ENCODE measurements at regions of chr7 and their contacts with region 1.

Region 1: DNA sequence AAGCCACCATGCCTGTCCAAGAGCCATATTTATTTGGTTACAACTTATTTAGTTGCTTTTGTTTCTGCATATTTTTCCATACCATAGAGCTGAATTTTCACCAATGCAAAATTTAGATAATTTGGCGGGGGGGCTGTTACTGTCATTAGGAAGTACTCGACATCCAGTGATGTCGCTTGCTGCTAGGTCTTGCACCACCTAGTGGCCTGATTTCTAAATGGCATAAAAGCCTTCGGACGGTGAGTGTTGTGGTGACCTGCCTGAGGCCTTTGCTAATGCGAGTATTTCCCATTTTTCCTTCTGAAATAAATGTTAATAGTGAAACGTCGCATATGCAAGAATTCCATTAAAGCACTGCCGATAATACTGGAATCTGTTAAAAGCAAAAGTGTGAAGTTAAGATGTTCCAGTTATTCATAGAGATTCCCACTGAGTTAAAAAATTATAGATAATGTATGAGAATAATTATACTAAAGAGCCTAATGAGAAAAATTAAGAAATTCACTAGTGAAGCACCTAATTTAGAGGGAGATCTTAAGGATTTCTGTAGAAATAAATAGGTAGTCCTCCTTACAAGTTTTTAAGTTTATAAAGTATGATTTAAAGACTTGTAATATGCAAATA is 86.1 kb upstream of the DNAJB6 start:
- DNase-seq: peak in 1 of 2 experiments; percentile 47
- H3K4me3 ChIP-seq: no peak overlapping the region
- H3K27ac ChIP-seq: no peak overlapping the region
- H3K4me1 ChIP-seq: no peaks in the 10 kb centered on the region
- H3K27me3 ChIP-seq: no peaks in the 10 kb centered on the region
- CTCF ChIP-seq: peak; percentile 93

Region 2: GRCh38 chr7:156903232-156903909 is 347.3 kb before region 1 on chr7:
- CTCF ChIA-PET with region 1: no interaction called
- POLR2A ChIA-PET with region 1: no interaction called
- intact Hi-C with region 1: loop called (anchors 5 kb)
- DNase-seq: peak; percentile 58 to 75
- H3K4me3 ChIP-seq: no peak overlapping the region
- H3K27ac ChIP-seq: no peak overlapping the region
- H3K4me1 ChIP-seq: peaks cover 13% of the 10 kb centered on the region
- H3K27me3 ChIP-seq: no peaks in the 10 kb centered on the region
- CTCF ChIP-seq: no peak

Region 3: DNA sequence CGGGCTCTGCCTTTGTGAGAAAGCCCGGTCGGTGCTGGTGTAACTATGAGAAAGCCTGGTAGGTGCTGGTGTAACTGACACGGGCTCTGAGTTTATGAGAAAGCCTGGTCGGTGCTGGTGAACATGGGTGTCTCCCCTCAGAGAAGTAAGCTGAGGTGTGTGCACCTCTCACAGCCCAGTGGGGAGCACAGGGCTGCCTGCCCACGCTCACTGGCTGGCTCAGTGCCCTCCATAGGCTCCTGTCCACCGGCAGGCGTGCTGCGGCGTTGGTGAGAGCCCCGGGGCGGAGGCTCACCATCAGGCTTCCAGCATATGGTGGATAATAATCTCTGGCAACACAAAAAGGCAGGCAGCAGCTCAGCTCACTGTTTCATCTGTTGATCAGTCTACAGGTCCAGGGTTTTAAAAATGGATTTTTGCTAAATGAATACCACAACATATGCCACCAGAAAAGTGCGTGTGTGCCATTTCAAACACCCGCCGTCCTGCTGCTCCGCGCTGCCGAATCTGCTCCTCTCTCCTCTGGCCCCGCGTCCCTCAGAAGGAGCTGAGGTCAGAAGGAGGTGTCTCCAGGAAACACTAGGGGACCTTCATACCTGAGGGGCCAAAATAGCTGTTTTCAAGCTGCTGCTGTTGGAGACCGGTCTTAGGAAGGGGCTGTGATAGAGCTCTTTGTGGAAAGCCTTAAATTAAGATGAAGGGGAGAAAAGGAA is 451.8 kb after region 1 on chr7:
- CTCF ChIA-PET with region 1: no interaction called
- POLR2A ChIA-PET with region 1: no interaction called
- intact Hi-C with region 1: no loop called
- DNase-seq: no peak
- H3K4me3 ChIP-seq: no peak overlapping the region
- H3K27ac ChIP-seq: no peak overlapping the region
- H3K4me1 ChIP-seq: no peaks in the 10 kb centered on the region
- H3K27me3 ChIP-seq: peaks cover 93% of the 10 kb centered on the region
- CTCF ChIP-seq: no peak